Right ventricle myocardium inferior (tissue), 1 donor: ENCODE measurements at regions of chr5 and their contacts with region 1.

Region 1: GRCh38 chr5:87010736-87011135 is 256.9 kb upstream of the RASA1 start:
- DNase-seq: no peak
- ATAC-seq: peak; percentile 37

Region 2: GRCh38 chr5:86880785-86881492 is 129.8 kb before region 1 on chr5:
- intact Hi-C with region 1: loop called (anchors 5 kb)
- DNase-seq: no peak
- ATAC-seq: peak; percentile 92